MCF 10A (cell line): ENCODE measurements at regions of chr2 and their contacts with region 1.

Region 1: DNA sequence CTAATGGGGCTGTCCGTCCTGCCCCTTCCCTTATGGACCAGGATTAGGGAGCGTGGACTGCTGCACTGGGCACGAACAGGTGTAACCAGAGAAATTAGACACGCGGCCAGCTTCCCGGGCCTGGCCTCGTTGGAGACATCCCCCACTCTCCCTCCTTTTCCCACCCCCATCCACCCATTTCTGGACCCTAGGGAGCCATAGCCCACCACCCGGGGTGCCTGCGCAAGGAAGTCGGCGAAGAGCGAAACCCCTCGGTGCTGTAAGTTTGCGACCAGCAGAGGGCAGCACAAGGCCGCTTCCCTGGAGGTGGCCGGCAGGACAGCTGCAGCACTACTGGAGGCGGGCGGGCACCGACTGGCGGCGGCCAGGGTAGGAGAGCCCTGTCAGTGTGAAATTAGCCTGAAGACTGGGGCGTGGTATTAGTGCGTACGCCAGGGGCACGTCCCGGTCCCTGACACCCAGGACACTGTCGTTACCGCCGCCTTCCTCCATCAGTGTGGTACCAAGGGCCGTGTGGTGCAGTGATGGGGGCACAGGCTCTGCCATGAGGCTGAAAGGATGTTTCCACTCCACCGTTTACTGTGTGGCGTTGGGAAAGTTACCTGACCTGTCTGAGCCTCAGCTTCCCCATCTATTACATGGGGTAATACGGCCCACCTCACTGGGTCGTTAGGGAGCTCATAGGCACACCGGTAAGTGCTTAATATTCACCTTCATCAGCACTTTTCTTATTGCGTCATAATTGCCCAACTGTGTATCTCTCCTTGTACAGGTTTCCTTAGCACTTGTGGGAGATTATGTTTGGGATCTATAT is 36.0 kb upstream of the CD207 start:
- DNase-seq: peak; percentile 75
- H3K4me3 Mint-ChIP-seq: peak overlapping the region; percentile 18
- H3K27ac Mint-ChIP-seq: no peak overlapping the region
- H3K4me1 Mint-ChIP-seq: peaks cover 6% of the 10 kb centered on the region
- H3K27me3 Mint-ChIP-seq: peaks cover 34% of the 10 kb centered on the region
- CTCF ChIP-seq: peak; percentile 92

Region 2: GRCh38 chr2:70789304-70790135 is 82.1 kb before region 1 on chr2:
- CTCF ChIA-PET with region 1: interaction called, 7 read pairs
- POLR2A ChIA-PET with region 1: no interaction called
- intact Hi-C with region 1: loop called (anchors 1 kb)
- DNase-seq: peak; percentile 63
- H3K4me3 Mint-ChIP-seq: peak overlapping the region; percentile 52
- H3K27ac Mint-ChIP-seq: no peak overlapping the region
- H3K4me1 Mint-ChIP-seq: peaks cover 5% of the 10 kb centered on the region
- H3K27me3 Mint-ChIP-seq: peaks cover 56% of the 10 kb centered on the region
- CTCF ChIP-seq: peak; percentile 53

Region 3: DNA sequence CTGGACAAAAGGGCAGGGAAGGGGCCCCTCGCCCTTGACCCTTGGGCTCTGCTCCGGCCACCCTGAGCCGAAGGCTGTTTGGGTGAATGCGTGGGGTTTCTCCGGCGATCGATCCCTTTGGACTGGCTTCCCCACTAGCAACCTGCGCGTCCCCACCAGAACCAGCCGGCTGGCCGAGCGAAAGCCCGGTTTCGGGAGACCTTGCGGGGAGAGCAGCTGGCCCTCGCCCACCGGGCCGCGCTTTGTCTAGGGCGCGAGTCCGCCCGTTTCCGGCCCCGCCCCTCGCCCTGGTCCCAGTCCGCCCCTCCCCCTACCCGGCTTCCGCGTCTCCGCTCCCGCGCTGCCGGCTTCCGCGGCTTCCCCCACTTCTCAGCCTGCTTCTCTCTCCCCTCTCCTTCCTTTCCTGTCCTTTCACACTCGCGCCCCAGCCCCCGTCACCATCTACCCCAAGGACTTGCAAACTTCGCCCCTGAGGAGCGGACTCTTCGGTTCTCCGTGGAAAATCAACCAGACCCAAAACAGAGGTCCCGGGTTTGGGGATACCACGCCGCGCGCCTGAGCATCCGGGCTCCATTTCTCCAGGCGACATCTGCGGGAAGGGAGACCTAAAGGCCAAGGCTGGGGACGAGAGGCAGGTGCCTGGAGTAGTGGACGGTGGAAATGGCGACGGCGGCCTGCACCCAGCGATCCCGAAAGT is 16.1 kb after region 1 on chr2:
- CTCF ChIA-PET with region 1: interaction called, 14 read pairs
- POLR2A ChIA-PET with region 1: no interaction called
- intact Hi-C with region 1: no loop called
- DNase-seq: no peak
- H3K4me3 Mint-ChIP-seq: no peak overlapping the region
- H3K27ac Mint-ChIP-seq: no peak overlapping the region
- H3K4me1 Mint-ChIP-seq: no peaks in the 10 kb centered on the region
- H3K27me3 Mint-ChIP-seq: peaks cover 66% of the 10 kb centered on the region
- CTCF ChIP-seq: no peak

Region 4: GRCh38 chr2:70919672-70920366 is 48.2 kb after region 1 on chr2:
- CTCF ChIA-PET with region 1: interaction called, 68 read pairs
- POLR2A ChIA-PET with region 1: interaction called, 3 read pairs
- intact Hi-C with region 1: loop called (anchors 1 kb)
- DNase-seq: peak; percentile 78
- H3K4me3 Mint-ChIP-seq: no peak overlapping the region
- H3K27ac Mint-ChIP-seq: no peak overlapping the region
- H3K4me1 Mint-ChIP-seq: no peaks in the 10 kb centered on the region
- H3K27me3 Mint-ChIP-seq: peaks cover 26% of the 10 kb centered on the region
- CTCF ChIP-seq: peak; percentile 58

Region 5: DNA sequence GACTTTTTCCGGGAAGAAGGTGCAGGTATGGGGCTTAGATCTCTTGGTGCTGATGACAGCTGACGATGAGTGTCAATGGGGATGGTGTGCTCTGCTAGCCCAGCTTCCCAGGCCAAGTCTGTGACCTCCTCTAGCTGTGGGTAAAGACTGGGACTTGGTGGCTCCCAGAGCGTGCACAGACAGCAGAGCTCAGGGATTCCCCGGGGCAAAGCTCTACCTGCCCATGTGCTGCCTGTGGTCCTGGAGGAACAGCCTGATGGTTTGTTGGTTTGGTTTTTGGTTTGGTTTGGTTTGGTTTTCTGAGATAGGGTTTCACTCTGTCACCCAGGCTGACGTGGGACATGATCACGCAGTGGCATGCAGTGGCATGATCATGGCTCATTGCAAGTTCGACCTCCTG is 83.3 kb after region 1 on chr2:
- CTCF ChIA-PET with region 1: interaction called, 19 read pairs
- POLR2A ChIA-PET with region 1: no interaction called
- intact Hi-C with region 1: no loop called
- DNase-seq: no peak
- H3K4me3 Mint-ChIP-seq: no peak overlapping the region
- H3K27ac Mint-ChIP-seq: no peak overlapping the region
- H3K4me1 Mint-ChIP-seq: no peaks in the 10 kb centered on the region
- H3K27me3 Mint-ChIP-seq: peaks cover 45% of the 10 kb centered on the region
- CTCF ChIP-seq: no peak

Region 6: DNA sequence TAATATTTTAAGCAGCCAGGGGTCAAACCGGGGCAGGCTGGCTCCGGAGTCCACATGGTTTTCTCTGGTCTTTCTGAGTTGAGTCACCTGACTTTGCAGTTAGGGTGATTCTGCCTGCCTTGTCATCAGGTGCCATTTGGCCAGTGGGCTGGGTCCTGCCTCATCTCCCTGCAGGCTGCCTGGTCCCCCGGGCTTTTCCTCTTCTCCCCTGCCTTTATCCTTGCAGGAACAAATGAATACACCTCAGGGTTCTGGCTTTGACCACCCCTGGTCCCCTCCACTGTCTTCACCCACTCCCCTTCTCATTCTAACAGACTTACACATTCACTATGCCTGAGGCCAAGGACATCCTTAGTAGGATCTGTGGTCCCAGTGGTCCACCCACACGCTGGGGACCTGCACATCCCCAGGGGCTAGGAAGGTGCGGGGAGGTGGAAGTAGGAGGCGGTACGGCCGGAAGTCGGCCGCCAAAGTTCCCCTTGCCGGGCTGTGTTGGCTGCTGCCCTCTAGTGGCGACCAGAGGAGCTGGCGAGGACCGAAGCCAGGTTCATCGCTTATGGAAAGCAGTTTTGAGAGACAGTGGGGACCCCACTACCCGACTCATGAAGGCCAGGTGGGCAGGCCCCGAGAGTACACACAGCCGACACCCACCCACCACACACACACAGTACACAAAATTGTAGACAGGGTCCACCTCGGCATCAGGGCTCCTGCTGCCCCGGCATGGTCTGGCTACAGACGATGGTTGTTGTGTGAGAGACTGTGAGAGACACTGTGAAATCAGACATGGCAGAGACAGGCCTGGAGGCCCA is 129.4 kb after region 1 on chr2:
- CTCF ChIA-PET with region 1: interaction called, 10 read pairs
- POLR2A ChIA-PET with region 1: no interaction called
- intact Hi-C with region 1: no loop called
- DNase-seq: peak; percentile 64
- H3K4me3 Mint-ChIP-seq: peak overlapping the region; percentile 68
- H3K27ac Mint-ChIP-seq: no peak overlapping the region
- H3K4me1 Mint-ChIP-seq: no peaks in the 10 kb centered on the region
- H3K27me3 Mint-ChIP-seq: no peaks in the 10 kb centered on the region
- CTCF ChIP-seq: peak; percentile 82